Dorsolateral prefrontal cortex (tissue), 120 donors: ENCODE measurements at regions of chr12 and their contacts with region 1.

Region 1: GRCh38 chr12:130498589-130499385 is 161.1 kb downstream of the PIWIL1 start:
- DNase-seq: peak in 5 of 10 donors; percentile 41 to 64 (median 54)
- H3K4me3 ChIP-seq: no peak overlapping the region
- H3K27ac ChIP-seq: peak overlapping the region in 2 of 59 donors; percentile 16 to 32
- H3K27me3 ChIP-seq: peaks cover 0 to 7% (median 0%) of the 10 kb centered on the region in 45 donors
- CTCF ChIP-seq: no peak

Region 2: DNA sequence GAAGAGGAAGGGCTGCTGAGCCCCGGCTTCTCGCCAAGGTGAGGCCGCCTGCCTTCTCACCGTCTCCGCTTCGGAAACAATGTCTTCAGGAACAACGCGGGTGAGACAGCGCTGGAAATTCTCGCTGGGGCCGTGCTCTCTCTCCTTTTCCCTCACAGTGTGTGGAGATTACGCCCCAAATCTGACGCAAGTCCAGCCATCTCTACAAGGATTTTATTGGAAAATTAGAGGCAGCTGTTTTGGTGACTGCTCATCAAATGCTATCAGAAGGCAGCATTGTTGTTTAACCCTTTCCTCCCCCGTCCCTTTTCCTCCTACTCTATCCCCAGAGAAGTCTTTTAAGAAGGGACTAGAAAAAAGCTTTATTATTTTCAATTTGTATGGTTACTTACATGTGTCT is 107.6 kb before region 1 on chr12:
- intact Hi-C with region 1: no loop called
- DNase-seq: no peak
- H3K4me3 ChIP-seq: no peak overlapping the region
- H3K27ac ChIP-seq: no peak overlapping the region
- H3K27me3 ChIP-seq: peaks cover 0 to 40% (median 0%) of the 10 kb centered on the region in 45 donors
- CTCF ChIP-seq: no peak

Region 3: GRCh38 chr12:130650131-130650530 is 151.3 kb after region 1 on chr12:
- intact Hi-C with region 1: loop called in 1 of 2 experiments (anchors 5 kb)
- DNase-seq: no peak
- H3K4me3 ChIP-seq: peak overlapping the region in 4 of 59 donors; percentile 5 to 20 (median 18)
- H3K27ac ChIP-seq: peak overlapping the region in 2 of 59 donors; percentile 11 to 62
- H3K27me3 ChIP-seq: no peaks in the 10 kb centered on the region
- CTCF ChIP-seq: no peak